Endothelial cell of umbilical vein (primary cell): ENCODE measurements at regions of chr3 and their contacts with region 1.

Region 1: GRCh38 chr3:29065211-29065785 is 215.6 kb upstream of the RBMS3 start:
- DNase-seq: peak; percentile 100
- H3K4me3 ChIP-seq: no peak overlapping the region
- H3K27ac ChIP-seq: peak overlapping the region; percentile 71
- H3K4me1 ChIP-seq: peaks cover 17% of the 10 kb centered on the region
- H3K27me3 ChIP-seq: no peaks in the 10 kb centered on the region
- CTCF ChIP-seq: no peak
- POLR2A ChIP-seq: no peak

Region 2: DNA sequence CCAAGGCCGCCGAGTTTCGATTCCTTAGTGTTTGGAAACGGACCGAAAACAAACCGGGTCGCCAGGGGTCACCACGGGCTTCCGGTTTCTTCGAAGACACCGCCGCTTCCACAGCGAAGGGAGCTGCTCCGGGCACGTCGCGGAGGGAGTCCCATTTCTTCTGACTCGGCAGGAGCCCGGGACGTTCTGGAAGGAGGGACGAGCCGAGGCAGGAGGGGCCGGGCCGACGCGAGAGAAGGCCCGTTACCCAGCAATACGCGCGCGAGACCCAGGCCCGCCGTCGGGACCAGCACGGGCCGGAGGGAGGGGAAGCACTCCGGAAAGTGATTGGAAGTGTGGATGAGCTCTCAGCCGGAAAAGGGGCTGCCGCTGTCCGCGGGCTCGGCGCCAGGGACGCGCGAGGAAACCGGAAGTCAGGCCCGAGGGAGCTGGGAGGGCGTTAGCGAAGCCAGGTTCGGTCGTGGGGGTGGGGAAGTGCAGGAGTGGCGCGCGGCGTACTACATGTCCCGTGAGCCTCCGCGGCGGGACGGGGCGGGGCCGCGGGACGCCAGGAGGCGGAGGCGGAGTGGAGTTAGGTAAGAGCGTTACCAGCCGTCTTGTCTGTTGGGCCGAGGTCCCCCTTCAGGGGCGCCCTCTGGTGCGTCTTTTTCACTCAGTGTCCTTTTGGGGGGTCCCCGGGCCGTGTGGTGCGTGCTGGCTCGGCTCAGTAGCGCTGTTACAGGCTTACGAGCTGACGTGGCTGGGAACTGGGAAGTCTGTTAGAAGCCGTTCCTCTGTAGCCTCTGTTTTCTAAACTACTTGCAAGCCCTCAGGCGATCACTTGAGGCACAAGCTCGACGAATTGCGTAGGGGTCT is 716.4 kb before region 1 on chr3 and contains the starts of genes AZI2 and ZCWPW2:
- CTCF ChIA-PET with region 1: no interaction called
- POLR2A ChIA-PET with region 1: no interaction called
- dilution Hi-C with region 1: no loop called
- intact Hi-C with region 1: loop called (anchors 2 kb)
- DNase-seq: peak; percentile 95
- H3K4me3 ChIP-seq: peak within 1 kb of the TSS; percentile 59 to 86 (median 69)
- H3K27ac ChIP-seq: peak within 1 kb of the TSS; percentile 98
- H3K4me1 ChIP-seq: peaks cover 16% of the 10 kb centered on the region
- H3K27me3 ChIP-seq: no peaks in the 10 kb centered on the region
- CTCF ChIP-seq: peak in 1 of 2 donors; percentile 21
- POLR2A ChIP-seq: no peak
- total RNA-seq, gene AZI2: 39.5 and 50.0 TPM in 2 replicates
- total RNA-seq, gene ZCWPW2: 0.40 TPM in 1 of 2 replicates, not detected in the other

Region 3: GRCh38 chr3:29128001-29128400 is 62.7 kb after region 1 on chr3:
- CTCF ChIA-PET with region 1: no interaction called
- POLR2A ChIA-PET with region 1: no interaction called
- dilution Hi-C with region 1: no loop called
- intact Hi-C with region 1: loop called (anchors 1 kb)
- DNase-seq: peak; percentile 90
- H3K4me3 ChIP-seq: no peak overlapping the region
- H3K27ac ChIP-seq: peak overlapping the region; percentile 47
- H3K4me1 ChIP-seq: peaks cover 15% of the 10 kb centered on the region
- H3K27me3 ChIP-seq: no peaks in the 10 kb centered on the region
- CTCF ChIP-seq: no peak
- POLR2A ChIP-seq: no peak

Region 4: GRCh38 chr3:29186982-29187725 is 121.9 kb after region 1 on chr3:
- CTCF ChIA-PET with region 1: no interaction called
- POLR2A ChIA-PET with region 1: no interaction called
- dilution Hi-C with region 1: no loop called
- intact Hi-C with region 1: loop called (anchors 1 kb)
- DNase-seq: peak; percentile 76
- H3K4me3 ChIP-seq: no peak overlapping the region
- H3K27ac ChIP-seq: peak overlapping the region; percentile 90
- H3K4me1 ChIP-seq: peaks cover 17% of the 10 kb centered on the region
- H3K27me3 ChIP-seq: no peaks in the 10 kb centered on the region
- CTCF ChIP-seq: no peak
- POLR2A ChIP-seq: no peak

Region 5: GRCh38 chr3:29240248-29240647 is 174.9 kb after region 1 on chr3:
- CTCF ChIA-PET with region 1: no interaction called
- POLR2A ChIA-PET with region 1: no interaction called
- dilution Hi-C with region 1: no loop called
- intact Hi-C with region 1: loop called (anchors 1 kb)
- DNase-seq: peak; percentile 86
- H3K4me3 ChIP-seq: no peak overlapping the region
- H3K27ac ChIP-seq: peak overlapping the region; percentile 70
- H3K4me1 ChIP-seq: peaks cover 17% of the 10 kb centered on the region
- H3K27me3 ChIP-seq: no peaks in the 10 kb centered on the region
- CTCF ChIP-seq: no peak
- POLR2A ChIP-seq: no peak

Region 6: GRCh38 chr3:29525254-29525881 is 460.1 kb after region 1 on chr3:
- CTCF ChIA-PET with region 1: no interaction called
- POLR2A ChIA-PET with region 1: no interaction called
- dilution Hi-C with region 1: no loop called
- intact Hi-C with region 1: loop called (anchors 1 kb)
- DNase-seq: peak; percentile 93
- H3K4me3 ChIP-seq: no peak overlapping the region
- H3K27ac ChIP-seq: peak overlapping the region; percentile 64
- H3K4me1 ChIP-seq: peaks cover 25% of the 10 kb centered on the region
- H3K27me3 ChIP-seq: no peaks in the 10 kb centered on the region
- CTCF ChIP-seq: no peak
- POLR2A ChIP-seq: peak; percentile 48

Region 7: GRCh38 chr3:29764603-29765254 is 699.4 kb after region 1 on chr3:
- CTCF ChIA-PET with region 1: interaction called, 3 read pairs
- POLR2A ChIA-PET with region 1: no interaction called
- dilution Hi-C with region 1: no loop called
- intact Hi-C with region 1: loop called (anchors 1 kb)
- DNase-seq: peak; percentile 83
- H3K4me3 ChIP-seq: no peak overlapping the region
- H3K27ac ChIP-seq: no peak overlapping the region
- H3K4me1 ChIP-seq: peaks cover 14% of the 10 kb centered on the region
- H3K27me3 ChIP-seq: no peaks in the 10 kb centered on the region
- CTCF ChIP-seq: peak; percentile 36 to 47
- POLR2A ChIP-seq: no peak